Activated CD4-positive, alpha-beta T cell treated with anti-CD3 and anti-CD28 coated beads for 36 hours (primary cell): ENCODE measurements at regions of chrX and their contacts with region 1.

Region 1: DNA sequence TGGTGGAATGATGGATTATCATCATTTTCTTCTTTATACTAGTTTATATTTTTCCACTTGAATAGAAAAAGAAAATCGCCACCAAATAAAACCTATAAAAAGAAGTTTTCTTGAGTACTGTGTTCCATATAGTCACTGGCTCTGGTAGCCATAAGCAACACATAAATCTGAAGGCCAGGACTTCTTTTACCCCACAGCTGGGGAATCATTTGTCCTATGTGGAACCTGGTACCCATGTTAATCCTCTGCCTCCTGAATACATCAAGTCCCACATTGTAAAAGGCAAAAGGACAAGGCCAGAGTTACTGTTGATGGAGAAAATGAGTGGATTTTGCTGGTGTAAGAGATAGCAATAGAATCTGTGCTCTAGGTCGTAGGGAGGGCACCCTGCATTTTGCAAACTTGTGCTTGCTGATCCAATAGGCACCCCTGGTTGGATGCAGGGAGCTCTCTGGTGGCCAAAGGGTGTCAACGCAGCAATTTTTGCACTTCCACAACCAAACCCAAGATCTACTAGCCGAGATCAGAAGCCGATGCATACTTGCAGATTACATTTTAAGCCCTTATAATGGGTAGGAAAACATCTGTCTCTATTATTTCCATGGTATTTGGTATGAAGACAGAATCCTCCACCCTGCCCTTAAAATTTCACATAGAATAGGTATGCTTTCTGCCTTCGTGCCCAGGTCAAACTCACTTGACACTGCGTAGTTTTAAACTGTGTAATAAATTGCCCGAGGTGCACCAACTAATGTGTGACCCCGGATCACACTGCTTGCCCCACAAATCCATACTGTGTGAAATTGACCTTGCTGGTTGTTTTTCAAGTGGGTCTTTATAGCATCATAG is 146.2 kb upstream of the SCML1 start:
- DNase-seq: peak; percentile 68
- ATAC-seq: peak; percentile 82
- H3K4me3 Mint-ChIP-seq: no peak overlapping the region
- H3K27ac Mint-ChIP-seq: peak overlapping the region; percentile 20
- H3K4me1 Mint-ChIP-seq: peaks cover 23% of the 10 kb centered on the region
- H3K27me3 Mint-ChIP-seq: peaks cover 6% of the 10 kb centered on the region

Region 2: DNA sequence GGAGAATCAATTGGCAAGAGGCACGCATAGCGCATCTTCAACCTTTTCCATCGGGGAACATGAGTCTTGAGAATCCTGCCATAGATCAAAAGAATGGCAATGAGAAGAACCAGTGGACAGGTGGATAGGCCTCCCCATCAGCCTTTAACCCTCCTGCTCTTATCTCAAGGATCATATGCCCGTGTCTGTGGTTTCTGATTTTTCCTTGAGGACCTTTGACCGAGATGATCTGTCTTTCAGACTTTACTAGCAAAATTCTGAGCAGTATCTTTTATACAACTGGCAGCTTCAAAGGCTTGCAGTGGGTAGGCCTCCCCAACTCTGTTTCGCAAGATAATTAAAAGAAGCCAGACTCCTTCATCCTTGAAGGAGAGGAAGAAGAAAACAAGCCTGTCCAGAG is 470.3 kb before region 1 on chrX:
- CTCF ChIA-PET with region 1: no interaction called
- POLR2A ChIA-PET with region 1: no interaction called
- intact Hi-C with region 1: loop called in 1 of 2 experiments (anchors 5 kb)
- DNase-seq: no peak
- ATAC-seq: no peak
- H3K4me3 Mint-ChIP-seq: no peak overlapping the region
- H3K27ac Mint-ChIP-seq: no peak overlapping the region
- H3K4me1 Mint-ChIP-seq: no peaks in the 10 kb centered on the region
- H3K27me3 Mint-ChIP-seq: no peaks in the 10 kb centered on the region

Region 3: DNA sequence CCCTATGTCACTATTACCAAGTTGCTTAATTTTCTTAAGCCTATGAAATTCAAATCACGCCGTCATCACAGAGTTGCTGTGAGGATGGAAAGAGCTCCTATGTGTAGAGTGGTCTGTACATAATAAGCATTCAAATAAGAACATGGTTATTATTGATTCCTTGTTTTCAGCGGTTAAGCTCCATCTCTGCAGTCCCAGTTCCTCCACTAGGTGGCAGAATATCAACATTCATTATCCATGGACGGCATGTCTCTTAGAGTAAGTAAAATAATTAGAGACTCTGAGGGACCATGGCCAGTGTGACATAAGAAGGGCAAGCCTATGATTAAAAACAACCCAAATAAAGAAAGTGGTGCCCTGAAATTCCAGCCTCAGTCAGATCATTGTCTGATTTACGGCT is 348.6 kb before region 1 on chrX:
- CTCF ChIA-PET with region 1: interaction called, 4 read pairs
- POLR2A ChIA-PET with region 1: no interaction called
- intact Hi-C with region 1: loop called (anchors 1 to 2 kb)
- DNase-seq: peak; percentile 41
- ATAC-seq: peak; percentile 26
- H3K4me3 Mint-ChIP-seq: no peak overlapping the region
- H3K27ac Mint-ChIP-seq: no peak overlapping the region
- H3K4me1 Mint-ChIP-seq: no peaks in the 10 kb centered on the region
- H3K27me3 Mint-ChIP-seq: peaks cover 2% of the 10 kb centered on the region

Region 4: GRCh38 chrX:17374619-17375366 is 216.3 kb before region 1 on chrX and contains the start of gene NHS:
- CTCF ChIA-PET with region 1: interaction called, 4 read pairs
- POLR2A ChIA-PET with region 1: no interaction called
- intact Hi-C with region 1: loop called (anchors 2 to 5 kb)
- DNase-seq: peak; percentile 43
- ATAC-seq: no peak
- H3K4me3 Mint-ChIP-seq: peak within 1 kb of the TSS; percentile 43
- H3K27ac Mint-ChIP-seq: no peak within 1 kb of the TSS
- H3K4me1 Mint-ChIP-seq: peaks cover 13% of the 10 kb centered on the region
- H3K27me3 Mint-ChIP-seq: peaks cover 29% of the 10 kb centered on the region
- total RNA-seq, gene NHS: 6.7 to 10.2 TPM

Region 5: GRCh38 chrX:17535229-17535628 is 55.9 kb before region 1 on chrX:
- CTCF ChIA-PET with region 1: interaction called, 3 read pairs
- POLR2A ChIA-PET with region 1: no interaction called
- intact Hi-C with region 1: loop called (anchors 1 kb)
- DNase-seq: peak; percentile 67
- ATAC-seq: peak; percentile 66
- H3K4me3 Mint-ChIP-seq: no peak overlapping the region
- H3K27ac Mint-ChIP-seq: no peak overlapping the region
- H3K4me1 Mint-ChIP-seq: peaks cover 15% of the 10 kb centered on the region
- H3K27me3 Mint-ChIP-seq: peaks cover 3% of the 10 kb centered on the region

Region 6: GRCh38 chrX:17689971-17690409 is 98.9 kb after region 1 on chrX:
- CTCF ChIA-PET with region 1: interaction called, 3 read pairs
- POLR2A ChIA-PET with region 1: no interaction called
- intact Hi-C with region 1: loop called (anchors 2 to 10 kb)
- DNase-seq: peak; percentile 53
- ATAC-seq: peak; percentile 57
- H3K4me3 Mint-ChIP-seq: no peak overlapping the region
- H3K27ac Mint-ChIP-seq: no peak overlapping the region
- H3K4me1 Mint-ChIP-seq: peaks cover 4% of the 10 kb centered on the region
- H3K27me3 Mint-ChIP-seq: peaks cover 1% of the 10 kb centered on the region

Region 7: GRCh38 chrX:18017416-18017815 is 426.3 kb after region 1 on chrX:
- CTCF ChIA-PET with region 1: no interaction called
- POLR2A ChIA-PET with region 1: no interaction called
- intact Hi-C with region 1: no loop called
- DNase-seq: no peak
- ATAC-seq: no peak
- H3K4me3 Mint-ChIP-seq: no peak overlapping the region
- H3K27ac Mint-ChIP-seq: no peak overlapping the region
- H3K4me1 Mint-ChIP-seq: no peaks in the 10 kb centered on the region
- H3K27me3 Mint-ChIP-seq: no peaks in the 10 kb centered on the region